ENCODE measurements at regions of chr3 and their contacts with region 1.

Region 1: DNA sequence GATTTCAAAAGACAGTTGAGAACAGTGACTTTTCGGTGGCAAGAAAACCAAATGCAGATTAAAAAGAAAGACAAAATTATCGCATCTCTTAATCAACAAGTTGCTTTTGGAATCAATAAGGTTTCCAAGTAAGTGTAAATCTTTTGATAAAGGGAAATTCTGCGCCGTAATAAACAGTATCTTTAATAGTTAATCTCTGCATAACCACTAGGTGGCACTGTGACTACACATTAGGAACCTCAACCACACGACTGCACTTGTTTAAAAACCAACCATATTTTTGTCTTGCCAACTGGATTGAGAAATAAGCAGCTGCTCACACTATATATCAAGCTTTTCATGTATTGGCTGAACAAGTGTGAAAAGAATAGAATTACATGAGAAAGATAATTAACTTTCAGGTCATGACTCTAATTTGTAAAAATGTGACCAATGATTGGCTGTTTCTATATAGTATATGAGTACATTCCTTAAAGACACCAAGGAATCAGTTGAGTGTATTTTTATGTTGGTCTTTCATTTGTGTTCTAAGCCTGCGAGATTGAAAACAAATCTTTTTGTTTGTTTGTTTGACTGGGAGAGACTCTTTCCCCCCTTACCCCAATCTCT is 72.7 kb downstream of the DZIP3 start:
- DNase-seq: peak; percentile 63
- CTCF ChIP-seq: peak; percentile 58

Region 2: DNA sequence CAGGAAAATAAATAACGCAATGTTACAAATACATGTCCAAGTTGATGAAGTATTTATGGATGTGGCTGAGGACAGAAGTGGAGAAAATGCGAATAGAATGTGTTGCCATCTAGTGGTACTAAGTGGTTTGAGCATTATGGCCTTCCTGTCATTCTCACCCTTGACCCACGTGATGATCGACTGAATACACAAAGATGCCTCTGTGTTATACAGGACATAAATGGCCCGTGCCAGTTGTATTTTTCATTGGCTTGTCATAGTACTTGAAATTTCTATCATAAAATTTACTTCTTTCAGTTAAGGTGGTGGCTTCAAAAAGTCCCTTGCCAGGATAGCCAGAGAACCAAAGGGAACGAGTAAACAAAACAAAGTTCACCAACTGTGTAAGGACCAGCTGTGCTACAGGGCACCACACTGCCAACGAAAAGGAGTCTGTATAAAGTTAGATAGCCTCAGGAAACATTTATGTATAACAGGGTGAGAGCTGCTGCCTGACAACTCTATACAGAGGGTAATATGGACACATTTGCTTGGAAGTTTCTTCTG is 255.5 kb before region 1 on chr3:
- in situ Hi-C with region 1: no loop called
- DNase-seq: peak; percentile 74
- CTCF ChIP-seq: peak; percentile 69

Region 3: DNA sequence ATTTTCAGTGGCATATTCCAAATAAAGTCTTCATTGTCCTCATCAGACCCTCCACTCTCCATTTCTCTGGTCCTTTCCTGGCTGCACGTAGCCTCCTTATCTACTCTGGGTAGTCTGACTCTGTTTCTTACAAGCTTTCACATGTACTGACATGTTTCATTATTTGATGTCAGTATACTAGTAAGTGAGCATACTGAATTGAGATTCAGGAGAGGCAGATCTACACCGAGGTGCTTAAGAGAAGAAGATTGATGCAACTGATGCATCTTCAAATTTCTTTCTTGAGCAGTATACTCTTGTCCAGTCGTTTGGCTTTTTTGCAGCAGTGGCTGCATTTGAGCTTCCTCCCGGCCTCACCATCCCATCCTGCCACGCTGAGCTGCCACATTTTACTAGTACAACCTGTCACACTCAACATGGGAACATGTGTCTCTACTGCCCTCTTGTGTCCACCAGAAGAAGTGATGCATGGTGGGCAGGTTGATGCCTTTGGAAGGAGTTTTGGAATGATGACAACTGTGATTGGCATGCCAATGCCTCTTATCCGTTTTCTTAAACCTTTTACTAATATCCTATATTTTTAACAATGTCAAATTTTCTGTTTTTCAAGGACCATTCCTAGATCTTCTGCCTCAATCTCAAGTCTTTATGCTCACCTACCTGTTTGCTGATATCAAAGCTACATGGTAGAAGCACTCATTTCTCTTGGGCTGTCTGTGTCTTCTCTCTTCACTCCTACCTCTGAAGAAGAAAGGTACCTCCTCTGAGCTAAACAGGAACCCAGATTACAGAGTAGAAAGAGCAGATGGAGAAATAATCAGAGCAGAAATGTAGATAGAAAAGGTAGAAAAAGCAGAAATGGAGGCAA is 252.8 kb after region 1 on chr3:
- in situ Hi-C with region 1: loop called (anchors 10 kb)
- DNase-seq: peak; percentile 63
- CTCF ChIP-seq: peak; percentile 83

Region 4: DNA sequence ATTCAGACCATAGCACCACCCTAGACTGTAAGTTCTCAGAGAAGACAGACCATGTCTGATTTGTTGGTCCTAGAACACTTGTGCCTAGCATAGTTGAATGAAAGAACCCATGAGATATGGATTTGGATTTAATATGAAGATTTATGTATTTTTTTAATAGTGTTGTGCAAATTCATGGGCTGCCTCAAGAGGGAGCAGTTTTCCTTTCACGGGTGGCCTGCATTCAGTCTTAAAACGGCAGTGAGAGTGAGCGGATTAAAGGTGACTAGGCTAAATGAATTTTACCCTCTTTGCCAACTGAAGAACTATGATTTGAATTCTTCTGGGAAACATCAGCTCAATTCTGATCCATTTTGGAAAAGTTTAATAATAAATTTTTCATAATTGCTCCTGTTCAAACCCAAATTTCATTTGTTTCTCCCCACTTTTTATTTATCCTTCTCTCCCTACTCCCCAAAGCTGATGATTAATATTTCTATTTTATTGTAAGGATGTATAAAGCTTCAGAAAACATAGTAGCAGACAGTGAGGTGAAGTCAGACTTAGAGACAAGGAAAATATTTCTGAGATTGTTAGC is 388.4 kb after region 1 on chr3:
- in situ Hi-C with region 1: loop called (anchors 25 kb)
- DNase-seq: peak; percentile 32
- CTCF ChIP-seq: peak; percentile 31